ENCODE measurements at regions of chr3 and their contacts with region 1.

Region 1: DNA sequence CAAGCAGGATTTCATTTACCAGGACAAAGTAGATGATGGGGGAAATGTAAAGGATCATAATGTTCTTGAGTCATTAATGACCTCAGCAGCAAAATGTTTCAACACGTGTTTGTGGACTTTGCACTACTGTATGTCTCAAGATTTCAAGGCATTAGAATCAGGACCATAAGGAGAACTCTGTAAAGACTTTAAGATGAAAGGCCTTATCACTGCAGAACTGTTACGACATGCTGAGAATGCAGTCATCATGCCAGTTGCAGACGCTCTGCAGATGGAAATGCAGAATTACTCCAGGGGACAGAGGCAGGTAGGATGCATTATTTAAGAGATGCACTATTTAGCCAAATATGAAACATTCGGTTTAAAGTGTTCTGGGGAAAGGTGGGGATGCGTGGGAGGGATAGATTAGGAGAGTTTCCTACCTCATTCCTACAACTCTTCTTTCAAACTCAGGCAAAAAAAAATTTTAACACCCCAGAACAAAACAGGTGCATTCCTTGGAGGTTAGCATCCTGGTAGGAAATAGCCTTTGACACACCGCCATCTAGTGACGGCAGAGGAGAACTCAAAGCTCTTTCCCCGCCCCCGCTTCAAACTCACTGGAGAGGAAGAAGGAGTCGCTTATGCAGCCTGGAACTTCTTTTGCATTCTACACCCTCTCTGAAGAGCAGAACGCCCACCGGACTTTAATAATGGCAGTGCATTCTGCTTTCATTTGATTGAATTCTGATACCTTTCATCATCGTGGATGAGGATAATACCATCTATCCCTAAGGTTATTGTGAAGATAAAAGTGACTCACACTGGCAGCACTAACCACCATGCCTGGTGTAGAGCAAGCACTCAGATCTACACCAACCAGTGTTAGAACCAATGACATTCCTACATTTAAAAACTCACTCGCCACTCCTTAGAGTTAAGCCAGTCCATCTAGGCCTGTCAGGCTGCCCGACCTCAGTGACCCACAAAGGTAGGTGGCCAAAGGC is 43.1 kb upstream of the TOPAZ1 start:
- DNase-seq: peak; percentile 46
- H3K4me3 Mint-ChIP-seq: no peak overlapping the region
- H3K27ac Mint-ChIP-seq: no peak overlapping the region
- H3K4me1 Mint-ChIP-seq: no peaks in the 10 kb centered on the region
- H3K27me3 Mint-ChIP-seq: peaks cover 11% of the 10 kb centered on the region

Region 2: DNA sequence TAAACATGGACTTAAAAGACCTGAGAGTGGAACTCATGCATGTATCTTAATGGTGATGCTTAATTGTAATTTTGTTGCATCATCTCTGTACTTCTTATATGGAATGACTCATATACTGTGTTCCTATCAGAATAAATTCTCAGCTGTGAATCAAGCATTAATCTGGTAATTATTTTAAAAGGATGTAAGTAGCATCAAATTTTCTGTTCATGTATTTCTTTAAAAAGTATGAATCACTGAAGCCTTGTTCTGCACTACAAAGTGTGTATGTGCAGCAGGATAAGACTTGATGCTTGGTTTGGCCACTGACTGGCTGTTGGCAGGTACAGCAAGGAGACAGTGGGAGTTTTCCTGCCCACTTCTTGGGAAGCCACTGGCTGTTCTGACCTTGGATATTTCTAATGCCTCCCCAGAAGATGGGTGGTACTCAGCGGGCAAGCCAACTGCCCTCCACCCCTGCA is 700.6 kb before region 1 on chr3:
- intact Hi-C with region 1: no loop called
- DNase-seq: no peak
- H3K4me3 Mint-ChIP-seq: no peak overlapping the region
- H3K27ac Mint-ChIP-seq: no peak overlapping the region
- H3K4me1 Mint-ChIP-seq: peaks cover 4% of the 10 kb centered on the region
- H3K27me3 Mint-ChIP-seq: peaks cover 21% of the 10 kb centered on the region

Region 3: DNA sequence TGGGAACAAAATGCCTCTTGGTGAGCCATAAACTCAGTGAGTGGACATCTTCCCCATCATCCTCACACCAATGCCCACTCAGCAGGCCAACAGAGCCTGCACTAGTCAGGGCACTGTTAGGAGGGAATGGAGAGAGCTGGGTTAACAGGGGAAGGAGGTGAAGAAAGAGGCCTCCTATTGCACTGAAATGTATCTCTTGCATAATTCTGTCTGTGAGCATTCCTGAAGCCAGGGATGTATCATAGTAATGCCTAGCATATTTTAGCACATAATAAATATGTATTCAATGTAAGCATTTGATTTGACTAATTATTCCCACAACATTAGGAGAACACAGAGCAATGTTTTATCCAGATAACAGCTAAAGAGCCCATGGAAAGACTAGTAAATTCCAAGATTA is 658.0 kb before region 1 on chr3:
- intact Hi-C with region 1: loop called (anchors 2 kb)
- DNase-seq: no peak
- H3K4me3 Mint-ChIP-seq: no peak overlapping the region
- H3K27ac Mint-ChIP-seq: no peak overlapping the region
- H3K4me1 Mint-ChIP-seq: no peaks in the 10 kb centered on the region
- H3K27me3 Mint-ChIP-seq: peaks cover 4% of the 10 kb centered on the region

Region 4: DNA sequence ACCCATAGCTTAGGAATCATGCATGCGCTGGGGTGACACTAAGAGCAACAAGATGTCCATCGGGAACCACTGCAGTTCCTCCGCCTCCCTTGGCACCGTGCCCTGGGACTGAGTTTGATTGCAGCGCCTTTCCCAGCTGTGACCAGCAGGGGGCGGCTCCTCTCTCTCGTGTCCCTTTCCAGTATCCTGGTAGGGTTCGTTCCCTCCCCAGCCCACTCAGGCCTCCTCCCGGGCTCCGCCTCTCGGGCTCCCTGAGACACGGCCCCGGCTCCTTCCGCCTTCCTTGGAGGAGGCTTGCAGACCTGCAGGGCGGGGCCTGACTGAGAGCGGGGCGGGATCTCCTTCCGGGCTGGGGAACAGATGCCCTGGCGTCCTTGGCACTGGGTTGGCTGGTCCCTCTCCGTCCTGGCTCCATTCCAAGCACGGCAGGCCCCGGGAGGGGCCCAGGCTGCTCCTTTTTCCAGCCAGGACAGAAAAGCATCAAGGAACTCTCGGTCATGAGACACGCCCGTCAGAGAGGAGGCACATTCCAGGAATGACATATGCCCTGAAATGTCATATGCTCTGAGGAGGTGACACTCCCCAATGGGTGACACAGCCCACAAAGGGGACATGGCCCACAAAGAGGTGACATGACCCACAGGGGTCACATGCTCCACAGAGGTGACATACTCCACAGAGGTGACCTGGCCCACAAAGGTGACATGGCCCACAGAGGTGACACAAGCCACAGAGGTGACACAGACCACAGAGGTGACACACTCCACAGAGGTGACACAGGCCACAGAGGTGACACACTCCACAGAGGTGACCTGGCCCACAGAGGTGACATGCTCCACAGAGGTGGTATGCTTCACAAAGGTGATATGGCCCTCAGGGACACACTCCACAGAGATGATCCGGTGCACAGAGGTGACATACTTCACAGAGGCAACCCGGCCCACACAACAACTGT is 428.8 kb before region 1 on chr3:
- intact Hi-C with region 1: loop called (anchors 1 kb)
- DNase-seq: peak; percentile 53
- H3K4me3 Mint-ChIP-seq: no peak overlapping the region
- H3K27ac Mint-ChIP-seq: no peak overlapping the region
- H3K4me1 Mint-ChIP-seq: peaks cover 16% of the 10 kb centered on the region
- H3K27me3 Mint-ChIP-seq: peaks cover 13% of the 10 kb centered on the region

Region 5: GRCh38 chr3:43855674-43856299 is 342.8 kb before region 1 on chr3:
- intact Hi-C with region 1: loop called (anchors 10 kb)
- DNase-seq: peak; percentile 16
- H3K4me3 Mint-ChIP-seq: no peak overlapping the region
- H3K27ac Mint-ChIP-seq: no peak overlapping the region
- H3K4me1 Mint-ChIP-seq: no peaks in the 10 kb centered on the region
- H3K27me3 Mint-ChIP-seq: peaks cover 26% of the 10 kb centered on the region

Region 6: DNA sequence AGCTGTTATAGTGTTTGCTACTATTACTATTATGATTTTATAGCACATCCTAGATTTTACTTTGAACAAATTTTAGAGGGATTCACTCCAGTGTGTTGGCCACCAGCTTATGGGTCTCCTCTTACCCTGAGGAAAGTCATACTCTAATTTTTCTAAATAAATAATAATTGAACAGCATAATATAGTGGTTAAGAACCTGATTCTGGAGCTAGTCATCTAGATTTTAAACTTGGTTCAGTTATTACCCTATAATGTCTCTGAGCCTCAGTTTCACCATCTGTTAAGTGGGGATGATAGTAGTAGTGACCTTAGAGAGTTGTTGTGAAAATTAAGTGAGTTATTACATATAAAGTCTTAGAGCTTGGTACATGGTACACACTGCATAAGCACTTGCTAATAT is 12.4 kb after region 1 on chr3:
- intact Hi-C with region 1: no loop called
- DNase-seq: no peak
- H3K4me3 Mint-ChIP-seq: no peak overlapping the region
- H3K27ac Mint-ChIP-seq: no peak overlapping the region
- H3K4me1 Mint-ChIP-seq: peaks cover 9% of the 10 kb centered on the region
- H3K27me3 Mint-ChIP-seq: peaks cover 38% of the 10 kb centered on the region

Region 7: GRCh38 chr3:44685128-44685800 is 486.7 kb after region 1 on chr3:
- intact Hi-C with region 1: no loop called
- DNase-seq: peak; percentile 15
- H3K4me3 Mint-ChIP-seq: peak overlapping the region; percentile 79
- H3K27ac Mint-ChIP-seq: no peak overlapping the region
- H3K4me1 Mint-ChIP-seq: peaks cover 8% of the 10 kb centered on the region
- H3K27me3 Mint-ChIP-seq: peaks cover 6% of the 10 kb centered on the region

Measured in activated T-helper 2 cell treated with anti-CD3 and anti-CD28 coated beads, Interferon-gamma antibody, Interleukin-2, Interleukin-4, amounts not matched to agents 10 μg/mL and 5 μg/mL and 100 μg/mL, durations not matched to agents 14 hours and 24 hours and 36 hours (primary cell).